Head of caudate nucleus (tissue), 42 donors: ENCODE measurements at regions of chr3 and their contacts with region 1.

Region 1: GRCh38 chr3:129507181-129507831 is 21.1 kb upstream of the RHO start:
- DNase-seq: peak in 40 of 42 donors; percentile 24 to 86 (median 60)

Region 2: GRCh38 chr3:129606636-129607390 is 99.5 kb after region 1 on chr3 and contains the start of gene PLXND1:
- intact Hi-C with region 1: loop called (anchors 10 kb)
- DNase-seq: peak in 34 of 42 donors; percentile 25 to 75 (median 56)